ENCODE measurements at regions of chr1 and their contacts with region 1.

Region 1: GRCh38 chr1:179081687-179082332 is at the start of gene TOR3A:
- DNase-seq: peak; percentile 85
- H3K4me3 Mint-ChIP-seq: peak within 1 kb of the TSS; percentile 98
- H3K27ac Mint-ChIP-seq: peak within 1 kb of the TSS; percentile 92
- H3K4me1 Mint-ChIP-seq: peaks cover 30% of the 10 kb centered on the region
- H3K27me3 Mint-ChIP-seq: no peaks in the 10 kb centered on the region
- total RNA-seq, gene TOR3A: 35.8 to 39.2 TPM

Region 2: GRCh38 chr1:178768423-178768822 is 313.4 kb before region 1 on chr1:
- CTCF ChIA-PET with region 1: no interaction called
- intact Hi-C with region 1: loop called (anchors 5 kb)
- DNase-seq: peak; percentile 21
- H3K4me3 Mint-ChIP-seq: no peak overlapping the region
- H3K27ac Mint-ChIP-seq: no peak overlapping the region
- H3K4me1 Mint-ChIP-seq: no peaks in the 10 kb centered on the region
- H3K27me3 Mint-ChIP-seq: no peaks in the 10 kb centered on the region

Region 3: GRCh38 chr1:179121159-179121938 is 39.5 kb after region 1 on chr1:
- CTCF ChIA-PET with region 1: interaction called, 5 read pairs
- intact Hi-C with region 1: loop called (anchors 1 kb)
- DNase-seq: peak; percentile 64
- H3K4me3 Mint-ChIP-seq: no peak overlapping the region
- H3K27ac Mint-ChIP-seq: no peak overlapping the region
- H3K4me1 Mint-ChIP-seq: peaks cover 3% of the 10 kb centered on the region
- H3K27me3 Mint-ChIP-seq: no peaks in the 10 kb centered on the region

Region 4: GRCh38 chr1:179190861-179191260 is 109.1 kb after region 1 on chr1:
- CTCF ChIA-PET with region 1: interaction called, 3 read pairs
- intact Hi-C with region 1: loop called (anchors 1 kb)
- DNase-seq: no peak
- H3K4me3 Mint-ChIP-seq: no peak overlapping the region
- H3K27ac Mint-ChIP-seq: no peak overlapping the region
- H3K4me1 Mint-ChIP-seq: peaks cover 20% of the 10 kb centered on the region
- H3K27me3 Mint-ChIP-seq: no peaks in the 10 kb centered on the region

Region 5: GRCh38 chr1:179293340-179294327 is 211.8 kb after region 1 on chr1 and contains the start of gene SOAT1:
- CTCF ChIA-PET with region 1: interaction called, 10 read pairs
- intact Hi-C with region 1: loop called (anchors 1 kb)
- DNase-seq: peak; percentile 93
- H3K4me3 Mint-ChIP-seq: peak within 1 kb of the TSS; percentile 93
- H3K27ac Mint-ChIP-seq: peak within 1 kb of the TSS; percentile 89
- H3K4me1 Mint-ChIP-seq: peaks cover 44% of the 10 kb centered on the region
- H3K27me3 Mint-ChIP-seq: no peaks in the 10 kb centered on the region
- total RNA-seq, gene SOAT1: 38.8 to 42.4 TPM

Region 6: DNA sequence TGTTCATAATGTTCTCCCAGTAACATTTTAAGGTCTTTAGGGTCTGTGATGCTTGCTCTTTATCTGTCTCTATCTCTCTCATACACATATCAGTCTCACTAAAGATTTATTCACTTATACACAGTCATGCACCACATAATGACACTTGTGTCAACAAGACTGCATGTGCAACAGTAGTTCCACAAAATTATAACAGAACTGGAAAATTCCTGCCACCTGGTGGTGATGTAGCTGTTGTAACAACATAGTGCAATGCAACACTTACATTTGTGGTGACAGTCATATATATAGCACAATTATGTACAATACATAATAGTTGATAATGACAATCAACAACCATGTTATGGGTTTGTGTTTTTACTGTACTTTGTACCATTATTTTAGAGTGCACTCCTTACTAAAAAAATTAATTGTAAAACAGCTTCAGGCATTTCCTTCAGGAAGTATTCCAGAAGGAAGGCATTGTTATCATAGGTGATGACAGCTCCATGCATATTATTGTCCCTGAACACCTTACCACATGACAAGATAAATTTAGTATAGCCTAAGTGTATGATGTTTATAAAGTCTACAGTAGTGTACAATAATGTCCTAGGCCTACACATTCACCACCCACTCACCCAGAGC is 517.9 kb after region 1 on chr1:
- CTCF ChIA-PET with region 1: interaction called, 5 read pairs
- intact Hi-C with region 1: loop called (anchors 1 kb)
- DNase-seq: peak; percentile 37
- H3K4me3 Mint-ChIP-seq: no peak overlapping the region
- H3K27ac Mint-ChIP-seq: no peak overlapping the region
- H3K4me1 Mint-ChIP-seq: no peaks in the 10 kb centered on the region
- H3K27me3 Mint-ChIP-seq: peaks cover 24% of the 10 kb centered on the region

Region 7: GRCh38 chr1:180631766-180632325 is 1550.0 kb after region 1 on chr1 and contains the start of gene XPR1:
- CTCF ChIA-PET with region 1: no interaction called
- intact Hi-C with region 1: loop called (anchors 10 kb)
- DNase-seq: peak; percentile 99
- H3K4me3 Mint-ChIP-seq: no peak within 1 kb of the TSS
- H3K27ac Mint-ChIP-seq: peak within 1 kb of the TSS; percentile 77
- H3K4me1 Mint-ChIP-seq: peaks cover 12% of the 10 kb centered on the region
- H3K27me3 Mint-ChIP-seq: no peaks in the 10 kb centered on the region
- total RNA-seq, gene XPR1: 14.8 to 18.1 TPM